AG04450 (cell line): ENCODE measurements at regions of chr4 and their contacts with region 1.

Region 1: GRCh38 chr4:118989098-118990080 is 100.7 kb downstream of the SYNPO2 start:
- DNase-seq: no peak
- H3K4me3 ChIP-seq: no peak overlapping the region
- H3K27ac ChIP-seq: peak overlapping the region; percentile 92
- H3K27me3 ChIP-seq: no peaks in the 10 kb centered on the region
- CTCF ChIP-seq: no peak

Region 2: GRCh38 chr4:118975449-118976192 is 13.8 kb before region 1 on chr4:
- CTCF ChIA-PET with region 1: no interaction called
- POLR2A ChIA-PET with region 1: no interaction called
- DNase-seq: no peak
- H3K4me3 ChIP-seq: no peak overlapping the region
- H3K27ac ChIP-seq: no peak overlapping the region
- H3K27me3 ChIP-seq: no peaks in the 10 kb centered on the region
- CTCF ChIP-seq: no peak

Region 3: DNA sequence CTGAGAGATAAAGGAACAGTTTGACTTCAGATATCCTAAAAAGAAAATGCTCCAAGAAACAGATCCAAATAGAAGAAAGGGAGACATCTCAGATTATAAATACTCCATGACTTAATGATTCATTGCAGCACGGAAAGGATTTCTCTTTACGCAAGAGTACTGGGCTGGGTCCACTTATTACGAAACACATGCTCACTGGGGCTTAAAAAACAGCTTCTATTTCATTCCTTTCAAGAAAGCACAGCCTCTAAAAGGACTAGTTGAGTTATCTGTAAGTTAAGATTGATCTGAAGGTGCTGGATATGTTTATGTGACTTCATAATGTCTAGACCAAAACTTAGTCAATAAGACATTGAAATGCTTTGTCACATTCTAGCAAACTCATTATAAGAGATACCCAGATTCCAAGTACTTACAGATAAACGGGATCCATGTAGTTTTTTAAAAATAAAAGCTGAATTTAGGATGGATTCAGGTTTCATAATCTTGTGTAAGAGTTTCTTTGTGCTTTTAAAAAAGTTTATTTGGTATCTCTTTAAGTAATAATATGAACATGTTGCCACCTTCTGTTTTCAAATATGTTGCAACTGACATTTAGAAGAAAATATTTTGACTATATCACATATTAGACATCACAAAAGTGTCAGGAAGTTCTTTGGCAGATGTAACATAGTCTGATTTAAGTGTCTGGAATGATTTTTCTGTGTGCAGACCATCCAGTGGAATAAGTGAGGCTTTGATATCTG is 36.7 kb after region 1 on chr4:
- CTCF ChIA-PET with region 1: interaction called, 3 read pairs
- POLR2A ChIA-PET with region 1: interaction called, 10 read pairs
- DNase-seq: peak; percentile 78
- H3K4me3 ChIP-seq: no peak overlapping the region; the same call in 1 of the 2 replicates
- H3K27ac ChIP-seq: peak overlapping the region; percentile 94
- H3K27me3 ChIP-seq: no peaks in the 10 kb centered on the region
- CTCF ChIP-seq: no peak